ENCODE measurements at regions of chr2 and their contacts with region 1.

Region 1: DNA sequence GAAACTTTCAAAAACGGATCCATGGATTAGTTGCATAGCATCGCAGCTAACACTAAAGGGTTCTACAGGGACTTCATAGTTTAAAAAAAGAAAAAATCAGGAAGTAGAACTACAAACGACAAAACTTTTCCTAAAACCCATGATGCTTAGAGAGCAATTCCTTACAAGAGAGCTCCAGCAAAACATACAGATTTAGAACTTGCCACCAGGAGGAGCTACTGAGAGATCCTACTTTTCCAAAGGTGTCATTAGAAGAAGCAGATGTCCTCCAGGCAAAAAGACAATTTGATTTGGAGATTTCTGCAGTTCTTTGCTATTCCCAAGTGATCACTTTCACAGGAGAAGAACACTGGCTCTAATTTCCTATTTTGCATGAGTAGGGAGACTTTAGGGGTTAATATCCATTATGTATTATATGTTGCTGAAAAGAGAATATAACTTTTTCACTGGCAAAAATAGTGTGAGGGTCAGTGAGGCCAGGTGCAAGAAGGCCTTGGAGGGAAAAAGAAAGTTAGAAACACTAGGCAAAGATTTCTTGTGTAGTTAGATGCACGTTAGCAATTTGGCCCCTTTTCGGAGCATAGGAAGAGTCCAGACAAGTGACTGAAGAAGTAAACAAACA is 436.2 kb downstream of the SUCLG1 start:
- DNase-seq: no peak
- ATAC-seq: no peak
- H3K4me3 Mint-ChIP-seq: no peak overlapping the region
- H3K27ac Mint-ChIP-seq: no peak overlapping the region
- H3K4me1 Mint-ChIP-seq: no peaks in the 10 kb centered on the region
- H3K27me3 Mint-ChIP-seq: no peaks in the 10 kb centered on the region
- CTCF ChIP-seq: peak; percentile 50

Region 2: DNA sequence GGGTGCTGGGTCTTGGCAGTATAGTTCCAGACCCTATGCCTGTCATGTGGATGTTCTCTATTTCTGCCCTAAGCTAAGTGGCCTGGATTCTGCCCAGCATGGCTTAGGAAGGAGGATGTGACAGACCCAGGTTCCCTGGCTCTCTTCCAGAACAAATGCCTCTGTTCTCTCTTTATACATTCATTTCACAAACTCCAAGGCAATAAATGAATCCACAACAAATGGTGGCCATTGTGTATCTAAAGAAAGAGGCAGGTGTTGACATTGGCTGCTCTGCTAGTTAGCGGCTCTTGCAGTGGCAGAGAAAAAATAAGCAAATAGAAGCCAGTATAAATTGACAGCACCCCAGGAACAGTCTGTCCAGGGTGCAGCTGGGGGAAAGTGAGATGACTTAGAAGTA is 137.5 kb after region 1 on chr2:
- CTCF ChIA-PET with region 1: no interaction called
- POLR2A ChIA-PET with region 1: no interaction called
- intact Hi-C with region 1: no loop called
- DNase-seq: no peak
- ATAC-seq: no peak
- H3K4me3 Mint-ChIP-seq: no peak overlapping the region
- H3K27ac Mint-ChIP-seq: no peak overlapping the region
- H3K4me1 Mint-ChIP-seq: no peaks in the 10 kb centered on the region
- H3K27me3 Mint-ChIP-seq: no peaks in the 10 kb centered on the region
- CTCF ChIP-seq: no peak

Region 3: GRCh38 chr2:84314901-84315330 is 292.0 kb after region 1 on chr2:
- CTCF ChIA-PET with region 1: interaction called, 3 read pairs
- POLR2A ChIA-PET with region 1: no interaction called
- intact Hi-C with region 1: loop called (anchors 2 kb)
- DNase-seq: peak; percentile 28
- ATAC-seq: peak; percentile 47
- H3K4me3 Mint-ChIP-seq: no peak overlapping the region
- H3K27ac Mint-ChIP-seq: no peak overlapping the region
- H3K4me1 Mint-ChIP-seq: no peaks in the 10 kb centered on the region
- H3K27me3 Mint-ChIP-seq: no peaks in the 10 kb centered on the region
- CTCF ChIP-seq: no peak